Sigmoid colon (tissue), 7 donors: ENCODE measurements at regions of chr4 and their contacts with region 1.

Region 1: GRCh38 chr4:7192252-7193029 is at the start of gene SORCS2:
- DNase-seq: peak; percentile 83
- H3K4me3 ChIP-seq: peak within 1 kb of the TSS; percentile 26 to 56 (median 50)
- H3K27ac ChIP-seq: peak within 1 kb of the TSS in 2 of 4 donors; percentile 2 to 41
- H3K4me1 ChIP-seq: peaks cover 0 to 29% (median 23%) of the 10 kb centered on the region in 4 donors
- H3K27me3 ChIP-seq: peaks cover 0 to 44% (median 28%) of the 10 kb centered on the region in 3 donors
- CTCF ChIP-seq: peak in 3 of 4 experiments; percentile 13 to 70 (median 40)
- EP300 ChIP-seq: no peak
- POLR2A ChIP-seq: no peak
- total RNA-seq, gene SORCS2: 2.0 to 6.4 (median 4.0) TPM

Region 2: GRCh38 chr4:7254736-7255487 is 62.5 kb after region 1 on chr4:
- intact Hi-C with region 1: loop called (anchors 5 kb)
- DNase-seq: no peak
- H3K4me3 ChIP-seq: no peak overlapping the region
- H3K27ac ChIP-seq: no peak overlapping the region
- H3K4me1 ChIP-seq: peaks cover 0 to 42% (median 31%) of the 10 kb centered on the region in 4 donors
- H3K27me3 ChIP-seq: no peaks in the 10 kb centered on the region
- CTCF ChIP-seq: no peak
- EP300 ChIP-seq: no peak
- POLR2A ChIP-seq: no peak

Region 3: DNA sequence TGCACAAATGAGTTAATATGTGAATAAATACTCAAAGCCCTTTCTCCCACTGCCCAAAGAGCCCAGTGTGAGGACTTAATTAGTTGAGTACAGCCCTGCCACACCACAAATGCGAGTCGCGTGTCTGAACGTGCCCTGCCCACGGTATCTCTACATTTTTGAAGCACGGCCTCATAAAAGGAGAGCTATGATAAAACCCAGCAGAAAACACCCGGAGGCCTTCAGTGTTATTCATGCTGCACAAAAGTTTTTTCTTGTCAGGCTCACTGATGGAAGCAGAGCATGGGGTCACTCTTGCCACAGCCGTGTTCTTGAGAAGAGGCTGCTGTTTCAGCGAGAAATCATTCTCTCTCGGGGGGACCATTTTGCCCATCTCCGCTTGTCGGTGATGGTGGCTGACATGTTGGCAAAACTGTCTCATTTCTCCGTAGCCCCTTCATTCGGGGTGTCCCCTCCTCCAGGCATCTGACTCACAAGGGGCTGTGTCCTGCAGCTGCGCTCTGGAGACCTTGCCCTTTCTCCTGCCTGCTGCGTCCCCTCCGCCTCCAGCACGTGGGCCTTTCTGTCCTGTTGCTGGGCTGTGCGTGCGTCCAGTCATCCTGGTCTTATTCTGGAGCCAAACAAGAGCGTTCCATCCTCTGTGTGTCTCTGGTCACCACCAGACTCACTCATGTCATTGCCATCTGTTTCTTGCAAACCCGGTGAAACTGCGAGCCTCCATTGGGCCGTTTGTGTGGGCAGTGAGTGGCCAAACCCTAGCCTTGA is 88.7 kb after region 1 on chr4:
- intact Hi-C with region 1: no loop called
- DNase-seq: no peak
- H3K4me3 ChIP-seq: no peak overlapping the region
- H3K27ac ChIP-seq: no peak overlapping the region
- H3K4me1 ChIP-seq: peaks cover 0 to 10% (median 8%) of the 10 kb centered on the region in 4 donors
- H3K27me3 ChIP-seq: no peaks in the 10 kb centered on the region
- CTCF ChIP-seq: no peak
- EP300 ChIP-seq: no peak
- POLR2A ChIP-seq: no peak

Region 4: DNA sequence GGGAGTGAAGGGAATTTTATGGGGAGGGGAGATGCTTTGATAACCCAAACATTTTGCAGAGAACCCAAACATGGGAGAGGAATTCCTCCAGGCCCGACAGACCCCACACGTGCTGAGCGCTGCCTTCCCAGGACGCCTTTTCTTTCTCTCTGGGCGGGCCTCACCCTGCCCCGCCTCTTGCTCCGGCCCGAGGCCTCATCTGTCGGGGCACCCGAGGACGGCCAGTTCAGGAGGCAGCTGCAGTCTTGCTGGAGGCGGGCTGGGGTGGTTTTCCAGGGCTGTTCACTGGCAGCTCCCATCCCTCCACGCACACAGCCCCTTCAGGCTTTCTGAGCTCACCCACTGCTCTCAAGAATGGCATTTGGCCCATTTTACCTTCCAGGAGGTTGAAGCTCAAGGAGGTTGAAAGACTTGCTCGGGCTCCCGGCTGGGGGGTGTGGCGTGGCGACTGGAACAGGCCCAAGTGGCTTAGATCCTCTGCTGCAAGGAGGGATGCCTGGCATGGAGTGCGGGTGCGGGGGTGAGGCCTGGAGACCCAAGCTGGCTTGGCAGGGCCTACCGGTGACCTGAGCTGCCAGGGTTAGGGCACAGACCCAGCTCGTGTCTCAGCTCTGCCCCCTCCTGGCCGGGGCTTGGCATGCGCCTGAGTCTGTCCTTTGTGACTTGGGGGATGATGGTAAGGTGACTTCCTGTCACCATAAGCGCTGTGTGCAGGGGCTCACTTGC is 143.1 kb after region 1 on chr4:
- intact Hi-C with region 1: loop called (anchors 2 kb)
- DNase-seq: no peak
- H3K4me3 ChIP-seq: no peak overlapping the region
- H3K27ac ChIP-seq: peak overlapping the region in 2 of 4 donors; percentile 26 to 37
- H3K4me1 ChIP-seq: peaks cover 0 to 18% (median 10%) of the 10 kb centered on the region in 4 donors
- H3K27me3 ChIP-seq: no peaks in the 10 kb centered on the region
- CTCF ChIP-seq: peak in 3 of 4 experiments; percentile 37 to 55 (median 47)
- EP300 ChIP-seq: no peak
- POLR2A ChIP-seq: no peak

Region 5: GRCh38 chr4:7719354-7720174 is 527.1 kb after region 1 on chr4:
- intact Hi-C with region 1: loop called (anchors 1 kb)
- DNase-seq: no peak
- H3K4me3 ChIP-seq: no peak overlapping the region
- H3K27ac ChIP-seq: no peak overlapping the region
- H3K4me1 ChIP-seq: peaks cover 0 to 7% (median 5%) of the 10 kb centered on the region in 4 donors
- H3K27me3 ChIP-seq: no peaks in the 10 kb centered on the region
- CTCF ChIP-seq: peak; percentile 55 to 85 (median 69)
- EP300 ChIP-seq: no peak
- POLR2A ChIP-seq: no peak